CD8-positive, alpha-beta T cell (primary cell): ENCODE measurements at regions of chr11 and their contacts with region 1.

Region 1: DNA sequence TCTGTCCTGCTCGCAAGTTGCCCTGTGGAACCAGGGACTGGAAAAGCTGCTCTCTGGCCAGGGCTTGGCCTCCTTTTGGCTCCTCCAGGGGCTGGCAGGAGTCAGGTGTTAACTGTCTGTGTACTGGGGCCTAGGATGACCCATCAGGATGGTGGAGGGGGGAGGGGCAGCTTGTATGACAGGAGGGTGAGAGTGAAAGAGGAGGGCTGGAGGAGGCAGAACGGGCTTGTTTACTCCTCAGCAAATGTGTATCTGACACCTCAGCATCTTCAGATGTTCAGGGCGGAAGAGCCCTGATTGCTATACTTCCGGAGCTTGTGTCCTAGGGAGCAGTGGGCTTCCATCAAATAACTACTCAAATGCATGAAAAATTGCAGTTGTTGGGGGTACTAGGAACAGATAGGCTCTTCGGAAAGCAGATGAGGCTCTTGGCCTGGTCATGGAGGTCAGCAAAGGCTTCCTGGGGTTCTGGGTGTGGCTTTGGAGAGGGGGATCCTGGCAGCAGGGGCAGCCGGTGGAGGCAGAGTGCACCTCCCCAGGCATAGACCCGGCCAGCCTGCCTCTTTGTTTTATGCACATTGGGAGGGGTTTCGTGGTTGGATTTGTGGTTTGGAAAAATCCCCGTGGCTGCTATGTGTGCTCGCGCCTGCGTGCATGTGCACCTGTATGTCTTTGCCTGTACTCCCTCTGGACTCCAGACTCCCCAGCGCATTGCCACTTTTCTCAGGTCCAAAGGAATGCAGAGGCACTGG is 31.2 kb downstream of the CD82 start:
- DNase-seq: peak; percentile 25 to 88 (median 58)
- ATAC-seq: peak; percentile 83
- H3K4me3 ChIP-seq: peak overlapping the region; percentile 7 to 14
- H3K4me3 Mint-ChIP-seq: peak overlapping the region; percentile 61
- H3K27ac ChIP-seq: peak overlapping the region; percentile 25 to 55
- H3K27ac Mint-ChIP-seq: peak overlapping the region; percentile 93
- H3K4me1 ChIP-seq: peaks cover 31% of the 10 kb centered on the region
- H3K4me1 Mint-ChIP-seq: peaks cover 40% of the 10 kb centered on the region
- H3K27me3 ChIP-seq: no peaks in the 10 kb centered on the region
- H3K27me3 Mint-ChIP-seq: no peaks in the 10 kb centered on the region
- CTCF ChIP-seq: no peak

Region 2: GRCh38 chr11:44611687-44612434 is 15.2 kb after region 1 on chr11:
- CTCF ChIA-PET with region 1: interaction called, 15 read pairs
- POLR2A ChIA-PET with region 1: interaction called, 4 read pairs
- intact Hi-C with region 1: loop called in 1 of 2 experiments (anchors 1 kb)
- DNase-seq: peak; percentile 25 to 90 (median 79)
- ATAC-seq: peak; percentile 86
- H3K4me3 ChIP-seq: no peak overlapping the region
- H3K4me3 Mint-ChIP-seq: peak overlapping the region; percentile 42
- H3K27ac ChIP-seq: peak overlapping the region in 1 of 2 experiments; percentile 48
- H3K27ac Mint-ChIP-seq: peak overlapping the region; percentile 97
- H3K4me1 ChIP-seq: peaks cover 67% of the 10 kb centered on the region
- H3K4me1 Mint-ChIP-seq: peaks cover 66% of the 10 kb centered on the region
- H3K27me3 ChIP-seq: no peaks in the 10 kb centered on the region
- H3K27me3 Mint-ChIP-seq: no peaks in the 10 kb centered on the region
- CTCF ChIP-seq: no peak

Region 3: GRCh38 chr11:44658506-44658850 is 61.8 kb after region 1 on chr11:
- CTCF ChIA-PET with region 1: no interaction called
- POLR2A ChIA-PET with region 1: no interaction called
- intact Hi-C with region 1: no loop called
- DNase-seq: peak in 2 of 9 experiments; percentile 33 to 42
- ATAC-seq: no peak
- H3K4me3 ChIP-seq: no peak overlapping the region
- H3K4me3 Mint-ChIP-seq: no peak overlapping the region
- H3K27ac ChIP-seq: no peak overlapping the region
- H3K27ac Mint-ChIP-seq: no peak overlapping the region
- H3K4me1 ChIP-seq: no peaks in the 10 kb centered on the region
- H3K4me1 Mint-ChIP-seq: peaks cover 5% of the 10 kb centered on the region
- H3K27me3 ChIP-seq: no peaks in the 10 kb centered on the region
- H3K27me3 Mint-ChIP-seq: peaks cover 7% of the 10 kb centered on the region
- CTCF ChIP-seq: no peak